Endothelial cell of umbilical vein (primary cell): ENCODE measurements at regions of chr5 and their contacts with region 1.

Region 1: GRCh38 chr5:100903039-100903887 is at the start of gene ST8SIA4:
- DNase-seq: peak; percentile 91
- H3K4me3 ChIP-seq: peak within 1 kb of the TSS; percentile 55 to 98 (median 97)
- H3K27ac ChIP-seq: peak within 1 kb of the TSS; percentile 80
- H3K4me1 ChIP-seq: peaks cover 19% of the 10 kb centered on the region
- H3K27me3 ChIP-seq: no peaks in the 10 kb centered on the region
- CTCF ChIP-seq: no peak
- POLR2A ChIP-seq: peak; percentile 57
- total RNA-seq, gene ST8SIA4: 25.0 and 28.3 TPM in 2 replicates

Region 2: DNA sequence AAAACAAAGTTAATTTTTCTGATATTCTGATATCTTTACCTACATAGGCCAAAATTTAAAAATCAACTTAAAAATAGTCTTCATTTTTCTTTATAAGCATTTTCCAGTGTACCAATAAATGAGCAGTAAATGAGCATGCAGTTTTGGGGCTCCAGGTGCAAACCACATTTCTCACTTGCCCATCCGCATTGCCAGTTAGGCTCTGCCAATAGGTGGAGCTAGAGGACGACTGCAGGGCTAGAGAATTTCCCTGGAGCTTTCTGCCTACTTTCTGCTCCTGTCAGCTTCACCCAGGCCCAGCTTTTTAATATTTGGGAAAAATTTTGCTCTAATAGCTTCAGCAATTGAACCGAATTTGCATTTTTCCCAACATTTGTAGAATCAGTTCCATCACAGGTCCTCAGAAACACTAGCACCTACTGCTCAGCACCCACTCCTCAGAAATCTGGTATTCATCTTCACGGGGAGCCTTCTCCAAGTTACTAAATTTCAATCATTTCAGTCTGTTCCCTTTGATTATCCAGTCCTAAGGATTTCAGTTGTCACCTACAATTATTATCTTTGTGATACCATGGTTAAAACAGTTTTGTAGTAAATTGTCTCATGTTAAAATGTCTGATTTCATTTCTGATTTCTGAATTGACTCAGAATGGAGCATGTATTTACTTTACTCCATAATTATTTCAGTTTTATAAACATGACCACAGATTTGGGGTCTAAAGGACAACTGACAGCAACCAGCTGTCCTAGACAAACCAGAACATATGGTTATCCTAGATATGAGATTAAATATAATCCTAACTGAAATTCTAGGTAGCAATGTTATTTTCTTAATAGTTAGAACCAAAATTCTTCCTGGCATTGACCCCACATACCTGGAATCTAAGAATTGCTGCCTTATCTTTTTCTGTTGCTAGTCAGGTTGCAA is 472.7 kb before region 1 on chr5:
- CTCF ChIA-PET with region 1: interaction called, 5 read pairs
- POLR2A ChIA-PET with region 1: no interaction called
- dilution Hi-C with region 1: no loop called
- intact Hi-C with region 1: loop called (anchors 2 kb)
- DNase-seq: peak; percentile 54
- H3K4me3 ChIP-seq: no peak overlapping the region
- H3K27ac ChIP-seq: no peak overlapping the region
- H3K4me1 ChIP-seq: no peaks in the 10 kb centered on the region
- H3K27me3 ChIP-seq: no peaks in the 10 kb centered on the region
- CTCF ChIP-seq: peak; percentile 90 to 96
- POLR2A ChIP-seq: no peak

Region 3: DNA sequence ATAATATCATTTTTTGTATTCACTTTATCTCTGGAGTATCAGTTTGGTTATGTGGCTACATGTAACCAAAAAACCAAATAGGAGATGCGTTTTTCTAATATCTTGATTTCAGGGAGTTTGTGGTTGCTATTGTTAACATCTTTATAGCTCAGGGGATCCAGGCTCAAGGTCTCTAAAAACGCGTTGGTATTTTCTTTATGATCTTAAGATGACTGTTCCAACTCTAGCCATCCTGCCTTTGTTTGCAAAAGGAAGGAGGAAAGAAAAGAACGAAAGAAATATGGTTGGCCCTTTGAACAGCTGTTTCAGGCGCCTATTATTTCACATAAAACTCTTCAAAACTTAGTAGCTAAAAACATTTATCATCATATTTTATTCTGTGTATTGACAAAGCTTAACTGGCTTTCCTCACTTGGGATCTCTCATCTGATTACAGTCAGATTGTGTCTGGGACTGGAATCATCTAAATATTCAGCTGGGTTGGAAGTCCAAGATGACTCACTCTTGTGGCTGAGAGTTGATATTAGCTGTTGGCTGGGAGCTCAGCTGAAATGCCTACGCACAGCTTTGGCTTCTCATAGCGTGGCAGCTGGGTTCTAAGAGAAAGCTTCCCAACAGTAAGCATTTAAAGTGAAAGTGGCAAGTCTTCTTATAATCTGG is 308.0 kb before region 1 on chr5:
- CTCF ChIA-PET with region 1: interaction called, 11 read pairs
- POLR2A ChIA-PET with region 1: interaction called, 5 read pairs
- dilution Hi-C with region 1: no loop called
- intact Hi-C with region 1: loop called (anchors 1 kb)
- DNase-seq: peak; percentile 96
- H3K4me3 ChIP-seq: peak overlapping the region in 2 of 3 experiments; percentile 2 to 54
- H3K27ac ChIP-seq: peak overlapping the region; percentile 87
- H3K4me1 ChIP-seq: peaks cover 21% of the 10 kb centered on the region
- H3K27me3 ChIP-seq: no peaks in the 10 kb centered on the region
- CTCF ChIP-seq: no peak
- POLR2A ChIP-seq: no peak

Region 4: DNA sequence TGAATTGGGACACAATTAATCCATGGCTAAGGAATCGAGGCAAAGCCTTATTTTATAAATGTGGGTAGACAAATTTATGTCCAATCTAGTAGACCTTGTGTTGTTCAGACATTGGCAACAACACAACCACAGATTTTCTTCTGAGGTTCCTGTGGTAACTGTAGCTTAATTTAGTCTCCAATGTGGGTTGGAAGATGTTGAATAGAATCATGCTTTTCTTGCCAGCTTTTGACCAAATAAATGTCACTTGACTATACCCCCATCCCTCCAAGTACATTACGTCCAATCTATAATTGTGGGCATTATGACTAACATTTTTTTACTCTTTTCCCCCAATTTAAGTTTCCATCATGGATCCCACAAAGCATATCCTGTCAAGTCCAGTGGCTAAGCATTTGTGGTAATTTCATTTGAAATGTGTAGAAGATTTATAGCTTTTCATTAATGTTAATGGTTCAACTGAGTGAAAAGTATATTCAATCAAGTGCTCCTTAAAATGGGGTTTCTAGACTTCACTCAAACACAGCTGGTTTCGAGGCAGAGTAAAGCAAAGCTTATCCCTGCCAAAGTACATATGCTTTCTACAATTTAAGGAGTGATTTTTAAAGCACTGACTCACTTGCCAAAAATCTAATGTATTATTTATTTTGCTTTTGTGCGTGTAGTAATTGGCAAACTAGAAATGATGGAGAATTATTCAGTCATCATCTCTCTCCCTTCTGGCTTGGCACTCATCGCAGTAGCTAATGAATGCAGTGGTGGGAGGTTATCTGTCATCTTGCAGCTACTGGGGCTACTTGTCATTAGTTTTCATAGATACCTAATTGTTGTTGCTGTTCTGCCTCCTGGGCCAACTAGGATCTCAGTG is 226.2 kb before region 1 on chr5:
- CTCF ChIA-PET with region 1: no interaction called
- POLR2A ChIA-PET with region 1: no interaction called
- dilution Hi-C with region 1: no loop called
- intact Hi-C with region 1: no loop called
- DNase-seq: peak; percentile 60
- H3K4me3 ChIP-seq: no peak overlapping the region
- H3K27ac ChIP-seq: no peak overlapping the region
- H3K4me1 ChIP-seq: no peaks in the 10 kb centered on the region
- H3K27me3 ChIP-seq: no peaks in the 10 kb centered on the region
- CTCF ChIP-seq: no peak
- POLR2A ChIP-seq: no peak

Region 5: DNA sequence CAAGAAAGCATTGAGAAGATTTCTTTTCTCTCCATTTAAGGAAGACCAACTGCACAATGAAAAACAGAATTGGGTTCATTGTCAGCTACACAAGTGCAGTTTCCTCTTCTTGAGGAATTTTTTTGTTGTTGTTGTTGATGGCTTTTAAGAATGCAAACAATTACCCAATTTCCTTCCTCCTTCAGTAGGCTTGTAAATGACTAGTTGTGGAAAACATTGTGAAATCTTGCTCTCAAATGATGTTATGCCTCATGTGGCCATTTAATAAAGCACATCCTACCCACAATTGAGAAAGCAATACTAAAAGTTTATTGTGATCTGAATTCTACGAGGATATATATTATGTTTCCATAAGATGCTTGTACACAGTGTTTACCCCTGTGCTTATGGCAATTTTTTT is 196.5 kb before region 1 on chr5:
- CTCF ChIA-PET with region 1: no interaction called
- POLR2A ChIA-PET with region 1: no interaction called
- dilution Hi-C with region 1: no loop called
- intact Hi-C with region 1: loop called (anchors 2 kb)
- DNase-seq: peak; percentile 68
- H3K4me3 ChIP-seq: no peak overlapping the region
- H3K27ac ChIP-seq: no peak overlapping the region
- H3K4me1 ChIP-seq: peaks cover 6% of the 10 kb centered on the region
- H3K27me3 ChIP-seq: no peaks in the 10 kb centered on the region
- CTCF ChIP-seq: peak in 1 of 2 donors; percentile 22
- POLR2A ChIP-seq: no peak

Region 6: GRCh38 chr5:100846772-100847171 is 56.5 kb before region 1 on chr5:
- CTCF ChIA-PET with region 1: interaction called, 20 read pairs
- POLR2A ChIA-PET with region 1: interaction called, 12 read pairs
- dilution Hi-C with region 1: no loop called
- intact Hi-C with region 1: loop called (anchors 1 kb)
- DNase-seq: peak; percentile 96
- H3K4me3 ChIP-seq: peak overlapping the region in 1 of 3 experiments; percentile 31
- H3K27ac ChIP-seq: peak overlapping the region; percentile 89
- H3K4me1 ChIP-seq: peaks cover 41% of the 10 kb centered on the region
- H3K27me3 ChIP-seq: no peaks in the 10 kb centered on the region
- CTCF ChIP-seq: no peak
- POLR2A ChIP-seq: peak; percentile 65

Region 7: DNA sequence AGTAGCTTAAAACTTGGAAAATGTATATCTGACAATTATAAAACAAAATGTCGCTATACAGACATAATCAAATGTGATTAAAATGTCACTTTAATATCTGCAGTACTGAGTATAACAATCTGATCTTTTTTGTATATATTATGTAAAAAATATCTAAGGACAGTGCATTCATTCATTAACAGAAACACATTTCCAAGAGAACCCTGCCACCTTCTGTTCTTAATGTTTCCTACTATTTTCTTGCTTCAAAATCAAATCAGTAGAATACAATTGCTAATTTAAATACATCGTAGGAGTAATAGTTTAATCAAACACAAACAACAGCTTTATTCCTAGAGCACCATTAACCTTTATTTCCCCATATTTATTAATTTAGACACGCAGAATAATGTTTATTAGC is 142.4 kb after region 1 on chr5:
- CTCF ChIA-PET with region 1: interaction called, 6 read pairs
- POLR2A ChIA-PET with region 1: no interaction called
- dilution Hi-C with region 1: no loop called
- intact Hi-C with region 1: loop called (anchors 1 kb)
- DNase-seq: peak; percentile 55
- H3K4me3 ChIP-seq: no peak overlapping the region
- H3K27ac ChIP-seq: no peak overlapping the region
- H3K4me1 ChIP-seq: no peaks in the 10 kb centered on the region
- H3K27me3 ChIP-seq: no peaks in the 10 kb centered on the region
- CTCF ChIP-seq: no peak
- POLR2A ChIP-seq: no peak

Region 8: GRCh38 chr5:101160002-101160401 is 256.7 kb after region 1 on chr5:
- CTCF ChIA-PET with region 1: no interaction called
- POLR2A ChIA-PET with region 1: no interaction called
- dilution Hi-C with region 1: no loop called
- intact Hi-C with region 1: no loop called
- DNase-seq: peak; percentile 9
- H3K4me3 ChIP-seq: no peak overlapping the region
- H3K27ac ChIP-seq: no peak overlapping the region
- H3K4me1 ChIP-seq: no peaks in the 10 kb centered on the region
- H3K27me3 ChIP-seq: no peaks in the 10 kb centered on the region
- CTCF ChIP-seq: no peak
- POLR2A ChIP-seq: no peak